ENCODE measurements at regions of chr12 and their contacts with region 1.

Region 1: GRCh38 chr12:82627569-82628198 is 59.0 kb upstream of the TMTC2 start:
- DNase-seq: no peak
- ATAC-seq: peak; percentile 83 to 89 (median 86)
- H3K4me3 ChIP-seq: no peak overlapping the region
- H3K27ac ChIP-seq: no peak overlapping the region
- H3K4me1 ChIP-seq: no peaks in the 10 kb centered on the region
- H3K27me3 ChIP-seq: no peaks in the 10 kb centered on the region
- CTCF ChIP-seq: peak; percentile 40 to 73 (median 66)
- POLR2A ChIP-seq: no peak

Region 2: GRCh38 chr12:82527165-82527780 is 100.4 kb before region 1 on chr12:
- intact Hi-C with region 1: loop called in 1 of 2 experiments (anchors 10 kb)
- DNase-seq: no peak
- ATAC-seq: peak; percentile 56 to 72 (median 68)
- H3K4me3 ChIP-seq: no peak overlapping the region
- H3K27ac ChIP-seq: no peak overlapping the region
- H3K4me1 ChIP-seq: peaks cover 0 to 26% (median 10%) of the 10 kb centered on the region in 4 donors
- H3K27me3 ChIP-seq: no peaks in the 10 kb centered on the region
- CTCF ChIP-seq: peak; percentile 82 to 90 (median 87)
- POLR2A ChIP-seq: no peak

Region 3: GRCh38 chr12:82565966-82566365 is 61.7 kb before region 1 on chr12:
- intact Hi-C with region 1: no loop called
- DNase-seq: no peak
- ATAC-seq: peak in 3 of 4 donors; percentile 9 to 63 (median 20)
- H3K4me3 ChIP-seq: no peak overlapping the region
- H3K27ac ChIP-seq: no peak overlapping the region
- H3K4me1 ChIP-seq: peaks cover 0 to 35% (median 6%) of the 10 kb centered on the region in 4 donors
- H3K27me3 ChIP-seq: no peaks in the 10 kb centered on the region
- CTCF ChIP-seq: no peak
- POLR2A ChIP-seq: no peak